HepG2 (cell line): ENCODE measurements at regions of chr15 and their contacts with region 1.

Region 1: DNA sequence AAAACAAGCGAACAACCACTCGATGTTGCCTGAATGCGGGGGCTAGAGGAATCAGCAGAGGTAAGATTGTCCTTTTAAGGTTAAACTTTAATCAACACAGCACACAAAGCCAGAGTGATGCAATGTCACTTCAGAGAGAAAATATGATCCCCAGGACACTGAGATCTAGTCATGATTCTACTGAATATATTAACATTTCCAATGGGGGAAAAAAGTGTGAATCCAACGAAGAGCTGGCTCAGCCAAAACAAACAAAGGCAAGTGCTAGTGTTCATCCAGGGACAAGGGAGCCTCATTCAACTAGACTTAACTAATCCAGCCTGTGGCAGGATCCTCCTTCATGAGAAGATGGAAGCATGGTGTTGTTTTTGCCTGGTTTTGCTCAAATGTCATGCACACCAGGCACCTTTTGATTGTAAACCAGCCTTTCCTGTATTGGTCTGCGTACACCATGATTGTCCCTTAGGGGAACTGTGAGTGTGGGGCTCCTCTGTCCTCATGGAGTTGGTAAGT is 35.8 kb downstream of the SCG5 start:
- DNase-seq: peak; percentile 96
- ATAC-seq: peak; percentile 97
- H3K4me3 ChIP-seq: peak overlapping the region; percentile 17 to 27 (median 26); a peak in 4 of 6 replicates
- H3K27ac ChIP-seq: peak overlapping the region; percentile 66
- H3K4me1 ChIP-seq: peaks cover 45% of the 10 kb centered on the region
- H3K27me3 ChIP-seq: no peaks in the 10 kb centered on the region
- CTCF ChIP-seq: no peak
- EP300 ChIP-seq: peak in 1 of 2 experiments; percentile 74; a peak in 2 of 4 replicates
- POLR2A ChIP-seq: peak in 1 of 2 experiments; percentile 51; a peak in 1 of 4 replicates
- RAD21 ChIP-seq: no peak

Region 2: DNA sequence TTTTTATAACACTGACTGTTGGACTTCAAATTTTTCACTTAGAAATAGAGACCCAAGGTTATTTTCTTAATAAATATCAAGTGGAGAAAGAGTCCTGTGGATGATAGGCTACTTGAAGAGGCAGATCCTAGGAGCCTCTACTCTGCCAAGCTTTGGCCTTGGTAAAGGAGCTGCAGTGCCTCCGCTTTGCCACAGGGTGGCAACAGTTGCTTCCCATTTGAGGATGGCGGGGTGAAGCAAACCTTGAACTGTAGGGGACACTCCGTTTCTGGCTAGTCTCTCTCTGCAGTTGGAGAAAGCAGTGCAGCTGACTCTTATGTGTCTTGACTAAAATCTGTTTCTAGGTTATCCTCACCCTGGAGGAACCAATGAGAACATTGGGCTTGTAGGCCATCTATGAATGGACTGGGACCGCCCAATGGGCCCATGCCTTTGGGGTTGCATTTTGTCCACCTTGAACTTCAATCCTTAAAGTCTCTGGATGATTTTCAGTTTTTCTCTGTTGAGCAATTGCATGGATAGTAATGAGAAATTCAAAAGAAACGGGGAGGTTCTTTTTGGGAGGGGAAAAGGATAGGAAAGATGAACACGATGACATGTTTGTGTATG is 26.0 kb before region 1 on chr15:
- CTCF ChIA-PET with region 1: no interaction called
- POLR2A ChIA-PET with region 1: no interaction called
- in situ Hi-C with region 1: no loop called
- intact Hi-C with region 1: no loop called
- DNase-seq: peak; percentile 48
- ATAC-seq: peak; percentile 93
- H3K4me3 ChIP-seq: no peak overlapping the region
- H3K27ac ChIP-seq: no peak overlapping the region
- H3K4me1 ChIP-seq: peaks cover 9% of the 10 kb centered on the region
- H3K27me3 ChIP-seq: no peaks in the 10 kb centered on the region
- CTCF ChIP-seq: peak; percentile 85
- EP300 ChIP-seq: no peak
- POLR2A ChIP-seq: no peak
- RAD21 ChIP-seq: peak; percentile 44; the same call in 1 of the 2 replicates

Region 3: GRCh38 chr15:32717426-32718226 is 40.3 kb after region 1 on chr15 and contains the start of gene GREM1:
- CTCF ChIA-PET with region 1: no interaction called
- POLR2A ChIA-PET with region 1: no interaction called
- in situ Hi-C with region 1: loop called (anchors 5 kb)
- intact Hi-C with region 1: loop called (anchors 5 kb)
- DNase-seq: no peak
- ATAC-seq: peak; percentile 48
- H3K4me3 ChIP-seq: peak within 1 kb of the TSS; percentile 33 to 68 (median 33)
- H3K27ac ChIP-seq: no peak within 1 kb of the TSS
- H3K4me1 ChIP-seq: peaks cover 21% of the 10 kb centered on the region
- H3K27me3 ChIP-seq: peaks cover 12 to 60% of the 10 kb centered on the region in 2 experiments
- CTCF ChIP-seq: no peak
- EP300 ChIP-seq: no peak
- POLR2A ChIP-seq: no peak
- RAD21 ChIP-seq: no peak
- total RNA-seq, gene GREM1: 0.02 and 0.11 TPM in 2 replicates

Region 4: DNA sequence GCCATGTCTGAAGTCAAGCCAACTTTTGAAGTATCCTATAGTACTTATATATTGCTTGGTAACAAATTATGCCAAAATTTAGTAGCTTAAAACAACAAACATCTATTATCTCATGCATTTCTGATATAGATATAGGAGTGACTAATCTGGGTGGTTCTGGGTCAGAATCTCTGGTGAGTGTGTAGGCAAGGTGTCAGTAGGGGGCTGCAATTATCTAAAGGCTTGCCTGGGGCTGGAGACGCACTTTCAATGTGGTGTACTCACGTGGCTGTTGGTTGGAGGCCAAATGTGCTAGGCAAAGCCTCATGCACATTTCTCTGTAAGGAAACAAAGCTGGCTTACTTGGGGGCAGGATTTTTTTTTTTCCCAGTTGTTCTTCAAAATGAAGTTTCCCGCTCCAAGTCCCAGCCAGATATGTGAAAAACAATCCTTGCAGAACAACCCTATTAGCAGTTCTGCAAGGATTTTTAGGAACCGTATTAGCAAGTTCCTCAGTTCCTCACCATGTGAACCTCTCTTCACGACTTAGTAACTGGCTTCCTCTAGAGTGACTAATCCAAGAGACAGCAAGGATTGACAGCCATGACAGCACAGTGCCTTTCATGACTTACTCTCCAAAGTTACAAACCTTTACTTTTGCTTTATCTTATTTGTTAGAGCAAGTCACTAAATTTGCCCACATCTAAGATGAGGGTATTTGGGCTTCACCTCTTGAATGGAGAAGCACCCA is 66.3 kb after region 1 on chr15:
- CTCF ChIA-PET with region 1: no interaction called
- POLR2A ChIA-PET with region 1: no interaction called
- in situ Hi-C with region 1: no loop called
- intact Hi-C with region 1: no loop called
- DNase-seq: no peak
- ATAC-seq: no peak
- H3K4me3 ChIP-seq: no peak overlapping the region
- H3K27ac ChIP-seq: no peak overlapping the region
- H3K4me1 ChIP-seq: no peaks in the 10 kb centered on the region
- H3K27me3 ChIP-seq: no peaks in the 10 kb centered on the region; a peak in 3 of 5 replicates
- CTCF ChIP-seq: no peak
- EP300 ChIP-seq: no peak
- POLR2A ChIP-seq: no peak
- RAD21 ChIP-seq: no peak